Naive thymus-derived CD4-positive, alpha-beta T cell (primary cell): ENCODE measurements at regions of chr7 and their contacts with region 1.

Region 1: GRCh38 chr7:96414931-96415292 is 93.0 kb upstream of the SLC25A13 start:
- DNase-seq: peak in 6 of 9 donors; percentile 13 to 40 (median 24)
- ATAC-seq: peak; percentile 67
- H3K4me3 ChIP-seq: no peak overlapping the region
- H3K4me3 Mint-ChIP-seq: no peak overlapping the region
- H3K27ac ChIP-seq: no peak overlapping the region
- H3K27ac Mint-ChIP-seq: no peak overlapping the region
- H3K4me1 ChIP-seq: no peaks in the 10 kb centered on the region
- H3K4me1 Mint-ChIP-seq: peaks cover 0 to 7% (median 0%) of the 10 kb centered on the region in 7 donors
- H3K27me3 ChIP-seq: no peaks in the 10 kb centered on the region
- H3K27me3 Mint-ChIP-seq: peaks cover 5 to 24% (median 18%) of the 10 kb centered on the region in 5 donors

Region 2: DNA sequence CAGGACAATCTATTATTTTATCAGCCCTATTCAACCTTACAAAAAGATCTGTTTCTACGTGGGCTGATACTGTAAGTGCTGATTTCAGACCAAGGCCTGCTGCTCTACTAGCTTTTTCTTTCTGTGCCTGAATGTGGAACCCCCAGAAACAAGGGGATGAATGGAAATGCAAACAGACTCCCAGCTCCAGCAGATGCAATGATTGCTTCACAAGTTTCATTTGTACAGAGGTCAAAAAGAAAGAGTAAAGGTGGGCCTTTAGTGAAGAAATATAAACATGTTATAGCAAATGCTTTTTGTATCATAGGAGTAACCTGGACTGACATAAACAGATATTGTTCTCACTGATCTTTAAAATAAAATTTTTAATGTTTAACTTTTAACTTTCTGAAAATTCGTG is 37.2 kb after region 1 on chr7:
- CTCF ChIA-PET with region 1: no interaction called
- POLR2A ChIA-PET with region 1: no interaction called
- intact Hi-C with region 1: no loop called
- DNase-seq: no peak
- ATAC-seq: no peak
- H3K4me3 ChIP-seq: no peak overlapping the region
- H3K4me3 Mint-ChIP-seq: no peak overlapping the region
- H3K27ac ChIP-seq: no peak overlapping the region
- H3K27ac Mint-ChIP-seq: no peak overlapping the region
- H3K4me1 ChIP-seq: no peaks in the 10 kb centered on the region
- H3K4me1 Mint-ChIP-seq: no peaks in the 10 kb centered on the region
- H3K27me3 ChIP-seq: no peaks in the 10 kb centered on the region
- H3K27me3 Mint-ChIP-seq: peaks cover 0 to 7% (median 2%) of the 10 kb centered on the region in 5 donors

Region 3: DNA sequence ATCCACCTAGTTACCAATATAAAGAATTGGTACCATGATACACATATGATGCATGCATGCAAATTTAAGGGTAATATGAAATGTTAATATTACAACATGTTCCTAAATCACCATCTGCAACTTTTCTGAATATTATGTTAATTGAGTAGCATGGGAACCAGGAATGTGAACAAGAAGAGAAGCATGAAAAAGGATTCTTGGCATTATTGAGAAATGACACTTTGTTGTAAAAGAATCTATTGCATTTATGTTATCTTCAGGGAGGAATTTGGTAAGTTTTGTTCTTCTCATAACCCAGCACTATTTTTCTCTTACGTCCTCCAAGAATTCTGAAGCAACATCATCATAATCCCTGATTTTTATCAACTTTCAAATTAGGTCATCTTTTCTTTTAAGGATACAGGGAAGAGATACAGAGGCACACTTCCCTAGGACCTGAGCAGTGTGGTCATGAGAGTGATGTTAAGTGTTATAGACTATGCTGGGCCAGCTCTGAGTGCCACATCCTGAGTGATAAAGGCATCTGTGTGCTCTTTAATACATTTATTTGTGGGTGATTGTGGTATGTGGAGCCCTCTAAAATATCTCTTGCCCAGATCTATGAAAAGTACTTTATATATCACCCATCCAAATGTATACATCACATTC is 67.0 kb after region 1 on chr7:
- CTCF ChIA-PET with region 1: no interaction called
- POLR2A ChIA-PET with region 1: no interaction called
- intact Hi-C with region 1: no loop called
- DNase-seq: no peak
- ATAC-seq: no peak
- H3K4me3 ChIP-seq: no peak overlapping the region
- H3K4me3 Mint-ChIP-seq: no peak overlapping the region
- H3K27ac ChIP-seq: no peak overlapping the region
- H3K27ac Mint-ChIP-seq: no peak overlapping the region
- H3K4me1 ChIP-seq: no peaks in the 10 kb centered on the region
- H3K4me1 Mint-ChIP-seq: peaks cover 11 to 28% (median 16%) of the 10 kb centered on the region in 7 donors
- H3K27me3 ChIP-seq: no peaks in the 10 kb centered on the region
- H3K27me3 Mint-ChIP-seq: no peaks in the 10 kb centered on the region

Region 4: GRCh38 chr7:96870156-96870555 is 455.2 kb after region 1 on chr7:
- CTCF ChIA-PET with region 1: no interaction called
- POLR2A ChIA-PET with region 1: no interaction called
- intact Hi-C with region 1: loop called in 1 of 2 experiments (anchors 10 kb)
- DNase-seq: no peak
- ATAC-seq: no peak
- H3K4me3 ChIP-seq: no peak overlapping the region
- H3K4me3 Mint-ChIP-seq: no peak overlapping the region
- H3K27ac ChIP-seq: no peak overlapping the region
- H3K27ac Mint-ChIP-seq: no peak overlapping the region
- H3K4me1 ChIP-seq: no peaks in the 10 kb centered on the region
- H3K4me1 Mint-ChIP-seq: no peaks in the 10 kb centered on the region
- H3K27me3 ChIP-seq: no peaks in the 10 kb centered on the region
- H3K27me3 Mint-ChIP-seq: peaks cover 4 to 35% (median 13%) of the 10 kb centered on the region in 5 donors